Activated B cell treated with CpG ODN at 0.5 μM for 24 hours (primary cell): ENCODE measurements at regions of chr1 and their contacts with region 1.

Region 1: GRCh38 chr1:226940029-226940805 is at the start of gene COQ8A:
- DNase-seq: peak; percentile 97
- ATAC-seq: peak; percentile 93
- H3K4me3 Mint-ChIP-seq: peak within 1 kb of the TSS; percentile 89
- H3K27ac Mint-ChIP-seq: peak within 1 kb of the TSS; percentile 96
- H3K4me1 Mint-ChIP-seq: peaks cover 49% of the 10 kb centered on the region
- H3K27me3 Mint-ChIP-seq: no peaks in the 10 kb centered on the region
- CTCF ChIP-seq: no peak
- total RNA-seq, gene COQ8A: 24.7 and 28.5 TPM in 2 replicates

Region 2: DNA sequence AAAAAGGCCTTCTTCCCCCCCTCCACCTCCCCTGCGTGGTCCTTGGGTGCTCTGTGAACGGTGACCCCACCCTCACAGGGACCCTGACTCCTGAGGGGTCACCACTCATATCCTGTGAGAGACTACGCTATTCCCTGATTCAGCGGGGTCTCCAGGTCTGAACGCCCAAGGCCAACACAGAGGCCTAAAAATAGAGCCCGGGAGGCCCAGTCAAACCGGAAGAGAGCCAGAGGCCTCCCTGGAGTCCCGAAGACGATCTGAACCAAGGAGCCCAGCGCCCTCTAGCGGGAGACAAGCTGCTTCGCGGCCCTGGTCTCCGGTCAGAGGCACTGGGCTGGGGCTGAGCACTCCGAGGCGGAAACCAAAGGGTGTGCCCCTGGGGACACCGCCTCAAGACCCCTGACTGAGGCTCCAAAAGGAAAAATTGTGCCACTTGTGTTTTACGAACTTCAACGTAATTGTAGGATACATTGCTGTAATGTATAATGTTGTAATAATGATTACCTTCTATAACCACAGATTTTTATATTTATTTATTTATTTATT is 112.2 kb before region 1 on chr1:
- CTCF ChIA-PET with region 1: no interaction called
- POLR2A ChIA-PET with region 1: interaction called, 5 read pairs
- intact Hi-C with region 1: loop called (anchors 2 kb)
- DNase-seq: peak; percentile 82
- ATAC-seq: peak; percentile 97
- H3K4me3 Mint-ChIP-seq: peak overlapping the region; percentile 58
- H3K27ac Mint-ChIP-seq: peak overlapping the region; percentile 80
- H3K4me1 Mint-ChIP-seq: peaks cover 37% of the 10 kb centered on the region
- H3K27me3 Mint-ChIP-seq: no peaks in the 10 kb centered on the region
- CTCF ChIP-seq: peak; percentile 67

Region 3: DNA sequence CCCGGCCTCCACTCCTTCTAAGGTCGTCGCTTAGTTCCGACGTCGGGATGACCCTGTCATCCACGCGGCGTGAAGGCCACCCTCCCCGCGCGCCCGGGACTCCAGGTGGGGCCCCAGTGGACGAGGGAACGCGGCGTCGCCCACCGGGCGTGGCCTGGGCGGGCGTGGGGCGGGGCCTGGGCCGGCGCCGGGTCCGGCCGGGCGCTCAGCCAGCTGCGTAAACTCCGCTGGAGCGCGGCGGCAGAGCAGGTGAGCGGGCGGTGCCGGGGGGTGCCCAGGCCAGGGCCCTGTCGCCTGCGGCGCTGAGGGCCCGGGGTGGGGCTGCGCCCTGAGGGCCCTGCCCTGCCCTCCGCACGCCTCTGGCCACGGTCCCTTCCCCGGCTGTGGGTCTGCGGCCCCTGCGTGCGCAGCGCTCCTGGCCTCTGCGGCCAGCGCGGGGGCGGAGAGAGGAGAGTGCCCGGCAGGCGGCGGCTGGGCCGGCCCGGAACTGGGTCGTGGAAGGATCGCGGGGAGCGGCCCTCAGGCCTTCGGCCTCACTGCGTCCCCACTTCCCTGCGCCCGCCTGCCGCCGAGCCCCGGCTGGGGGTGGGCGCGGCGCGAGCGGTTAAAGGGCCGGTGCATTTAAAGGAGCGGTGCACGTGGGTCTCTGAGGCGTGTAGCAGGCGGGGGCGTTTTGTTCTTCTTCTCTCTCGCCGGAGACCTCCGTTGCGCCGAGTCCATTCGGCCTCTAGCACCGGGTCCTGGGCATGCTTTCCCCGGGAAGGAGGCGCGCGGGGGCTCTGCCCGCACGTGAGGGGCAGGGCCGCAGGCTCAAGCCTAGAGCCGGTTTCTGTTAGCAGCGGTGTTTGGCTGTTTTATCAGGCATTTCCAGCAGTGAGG is 69.6 kb before region 1 on chr1 and contains the start of gene PSEN2:
- CTCF ChIA-PET with region 1: no interaction called
- POLR2A ChIA-PET with region 1: interaction called, 3 read pairs
- intact Hi-C with region 1: loop called (anchors 1 kb)
- DNase-seq: peak; percentile 80
- ATAC-seq: peak; percentile 96
- H3K4me3 Mint-ChIP-seq: peak within 1 kb of the TSS; percentile 87
- H3K27ac Mint-ChIP-seq: peak within 1 kb of the TSS; percentile 53
- H3K4me1 Mint-ChIP-seq: peaks cover 24% of the 10 kb centered on the region
- H3K27me3 Mint-ChIP-seq: no peaks in the 10 kb centered on the region
- CTCF ChIP-seq: no peak
- total RNA-seq, gene PSEN2: 13.4 and 14.3 TPM in 2 replicates

Region 4: GRCh38 chr1:226882631-226883409 is 57.4 kb before region 1 on chr1:
- CTCF ChIA-PET with region 1: no interaction called
- POLR2A ChIA-PET with region 1: interaction called, 23 read pairs
- intact Hi-C with region 1: no loop called
- DNase-seq: no peak
- ATAC-seq: peak; percentile 91
- H3K4me3 Mint-ChIP-seq: peak overlapping the region; percentile 58
- H3K27ac Mint-ChIP-seq: peak overlapping the region; percentile 84
- H3K4me1 Mint-ChIP-seq: peaks cover 55% of the 10 kb centered on the region
- H3K27me3 Mint-ChIP-seq: no peaks in the 10 kb centered on the region
- CTCF ChIP-seq: no peak

Region 5: GRCh38 chr1:226990133-226990716 is 50.0 kb after region 1 on chr1:
- CTCF ChIA-PET with region 1: no interaction called
- POLR2A ChIA-PET with region 1: interaction called, 6 read pairs
- intact Hi-C with region 1: loop called (anchors 2 kb)
- DNase-seq: no peak
- ATAC-seq: peak; percentile 94
- H3K4me3 Mint-ChIP-seq: peak overlapping the region; percentile 1
- H3K27ac Mint-ChIP-seq: peak overlapping the region; percentile 78
- H3K4me1 Mint-ChIP-seq: peaks cover 21% of the 10 kb centered on the region
- H3K27me3 Mint-ChIP-seq: no peaks in the 10 kb centered on the region
- CTCF ChIP-seq: no peak

Region 6: GRCh38 chr1:227734856-227735538 is 794.8 kb after region 1 on chr1 and contains the starts of genes JMJD4 and SNAP47:
- CTCF ChIA-PET with region 1: no interaction called
- POLR2A ChIA-PET with region 1: no interaction called
- intact Hi-C with region 1: loop called (anchors 1 kb)
- DNase-seq: peak; percentile 97
- ATAC-seq: peak; percentile 91
- H3K4me3 Mint-ChIP-seq: peak within 1 kb of the TSS; percentile 87
- H3K27ac Mint-ChIP-seq: peak within 1 kb of the TSS; percentile 78
- H3K4me1 Mint-ChIP-seq: peaks cover 42% of the 10 kb centered on the region
- H3K27me3 Mint-ChIP-seq: no peaks in the 10 kb centered on the region
- CTCF ChIP-seq: no peak
- total RNA-seq, gene JMJD4: 23.5 and 26.7 TPM in 2 replicates
- total RNA-seq, gene SNAP47: 24.2 and 24.3 TPM in 2 replicates